PC-3 (cell line): ENCODE measurements at regions of chr14 and their contacts with region 1.

Region 1: DNA sequence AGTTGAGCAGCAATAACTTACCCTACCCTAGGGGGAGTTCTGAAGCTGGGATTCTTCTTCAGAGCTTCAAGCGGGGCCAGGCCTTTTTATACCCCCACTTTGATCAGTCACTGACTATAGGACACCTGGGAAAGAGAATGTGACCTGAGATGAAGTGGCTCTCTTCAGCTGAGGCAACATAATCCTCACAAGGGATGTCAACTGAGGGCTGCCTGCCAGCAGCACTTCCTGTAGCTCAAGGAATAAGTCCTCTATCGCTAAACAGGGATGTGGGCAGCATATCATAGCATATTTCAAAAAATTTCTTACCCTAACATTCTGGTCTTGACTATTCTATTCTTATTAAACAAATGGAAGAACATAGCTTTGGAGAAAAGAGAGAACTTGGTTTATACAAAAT is 17.4 kb downstream of the LGALS3 start:
- DNase-seq: no peak
- ATAC-seq: peak; percentile 29; the same call in 1 of the 2 replicates
- H3K4me3 ChIP-seq: no peak overlapping the region
- H3K27ac ChIP-seq: no peak overlapping the region
- H3K4me1 ChIP-seq: no peaks in the 10 kb centered on the region
- H3K27me3 ChIP-seq: no peaks in the 10 kb centered on the region
- CTCF ChIP-seq: no peak

Region 2: GRCh38 chr14:55085060-55085660 is 61.3 kb before region 1 on chr14:
- CTCF ChIA-PET with region 1: interaction called, 7 read pairs
- POLR2A ChIA-PET with region 1: no interaction called
- intact Hi-C with region 1: loop called (anchors 5 kb)
- DNase-seq: no peak
- ATAC-seq: no peak
- H3K4me3 ChIP-seq: no peak overlapping the region
- H3K27ac ChIP-seq: no peak overlapping the region
- H3K4me1 ChIP-seq: peaks cover 3% of the 10 kb centered on the region; the same call in 1 of the 2 replicates
- H3K27me3 ChIP-seq: no peaks in the 10 kb centered on the region
- CTCF ChIP-seq: no peak

Region 3: GRCh38 chr14:55212634-55213033 is 66.2 kb after region 1 on chr14:
- CTCF ChIA-PET with region 1: no interaction called
- POLR2A ChIA-PET with region 1: no interaction called
- intact Hi-C with region 1: no loop called
- DNase-seq: no peak
- ATAC-seq: peak; percentile 12; the same call in 1 of the 2 replicates
- H3K4me3 ChIP-seq: no peak overlapping the region
- H3K27ac ChIP-seq: no peak overlapping the region
- H3K4me1 ChIP-seq: no peaks in the 10 kb centered on the region
- H3K27me3 ChIP-seq: 0 out of 2 replicates have a peak, but pooled peaks cover under 1% of the 10 kb centered on the region
- CTCF ChIP-seq: no peak